ENCODE measurements at regions of chr3 and their contacts with region 1.

Region 1: DNA sequence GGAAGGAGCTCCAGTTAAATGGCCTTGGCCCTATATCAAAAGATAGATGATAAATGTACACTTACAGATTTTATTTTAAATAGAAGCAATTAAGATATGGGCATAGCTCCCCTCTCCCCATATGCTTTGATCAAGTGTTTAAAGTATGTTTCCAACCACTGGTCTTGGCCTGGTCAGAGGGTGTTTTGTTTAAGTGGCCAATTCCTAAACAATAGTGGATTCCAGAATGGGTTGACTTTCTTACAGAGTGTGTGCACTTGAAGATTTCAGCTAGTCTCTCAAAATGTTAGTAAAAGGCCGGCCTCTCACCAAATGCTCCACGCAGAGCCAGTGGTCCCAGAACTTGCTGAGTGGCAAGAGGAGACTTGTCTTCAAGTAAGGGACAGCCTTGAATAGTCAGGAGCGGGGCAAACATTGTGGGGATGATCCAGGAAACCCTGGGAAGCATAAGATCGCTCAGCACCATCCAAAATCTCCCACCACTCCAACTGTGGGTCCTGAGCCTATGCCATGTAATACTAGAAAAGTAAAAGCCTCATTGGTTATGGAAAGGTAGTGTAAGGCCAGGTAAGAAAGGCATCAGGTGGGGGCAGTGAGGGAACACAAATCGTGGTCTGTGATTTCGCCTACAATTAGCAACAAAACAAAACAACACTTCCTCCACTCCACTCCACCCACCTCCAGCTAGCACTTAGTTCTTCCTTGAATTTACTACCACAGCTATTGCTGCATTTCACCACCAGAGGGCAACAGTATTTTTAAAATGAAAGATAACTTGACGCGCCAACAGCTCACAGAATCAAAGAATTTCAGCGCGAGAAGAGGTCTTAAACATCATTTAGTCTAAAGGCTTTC is 4.8 kb downstream of the RARRES1 start:
- DNase-seq: peak in 2 of 5 donors; percentile 54 to 55
- ATAC-seq: peak in 1 of 4 donors; percentile 45
- H3K4me3 ChIP-seq: peak overlapping the region in 4 of 12 donors; percentile 15 to 29 (median 20)
- H3K27ac ChIP-seq: peak overlapping the region in 3 of 12 donors; percentile 7 to 48 (median 28)
- H3K4me1 ChIP-seq: peaks cover 0 to 65% (median 29%) of the 10 kb centered on the region in 12 donors
- H3K27me3 ChIP-seq: no peaks in the 10 kb centered on the region
- CTCF ChIP-seq: peak; percentile 73 to 89 (median 84)
- POLR2A ChIP-seq: no peak

Region 2: GRCh38 chr3:158368271-158368670 is 359.2 kb before region 1 on chr3:
- intact Hi-C with region 1: no loop called
- DNase-seq: no peak
- ATAC-seq: no peak
- H3K4me3 ChIP-seq: no peak overlapping the region
- H3K27ac ChIP-seq: no peak overlapping the region
- H3K4me1 ChIP-seq: no peaks in the 10 kb centered on the region
- H3K27me3 ChIP-seq: no peaks in the 10 kb centered on the region
- CTCF ChIP-seq: no peak
- POLR2A ChIP-seq: no peak

Region 3: DNA sequence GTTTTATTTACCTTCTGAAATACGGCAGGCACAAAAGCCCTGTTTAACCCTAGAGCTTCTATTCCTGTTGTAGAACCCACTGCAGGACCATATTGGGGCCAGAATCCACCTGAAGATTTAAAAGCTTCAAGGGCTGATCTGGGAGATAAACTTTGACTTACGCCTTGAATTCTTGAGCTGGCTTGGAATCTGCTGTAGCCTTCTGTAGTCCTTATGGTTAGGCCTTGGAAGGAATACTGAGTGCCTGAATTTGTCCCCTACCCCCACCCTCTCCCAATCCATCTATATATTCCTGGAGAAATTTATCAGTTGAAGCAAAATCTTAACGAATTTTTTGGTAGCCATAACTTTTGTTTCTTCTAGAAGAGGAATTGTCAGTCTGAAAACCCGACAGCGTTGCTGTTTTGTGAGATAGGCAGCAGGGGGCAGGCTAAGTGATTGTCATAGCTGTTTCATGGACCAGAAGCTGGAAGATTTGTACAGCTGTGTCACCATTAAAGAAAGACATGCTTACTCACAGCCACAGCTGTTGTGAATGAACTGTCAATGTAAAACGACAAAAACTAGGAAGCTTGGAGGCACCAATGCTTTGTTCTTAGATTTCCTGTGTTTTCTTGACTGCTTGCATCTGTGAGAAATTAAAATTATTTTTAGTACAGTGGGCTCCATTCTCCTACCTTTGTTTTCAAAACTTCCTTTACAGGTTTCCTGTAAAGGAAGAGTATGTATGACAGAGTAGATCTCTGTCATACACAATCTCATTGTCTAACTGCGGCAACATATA is 67.8 kb before region 1 on chr3:
- intact Hi-C with region 1: loop called in 2 of 10 experiments (anchors 5 to 10 kb)
- DNase-seq: peak in 3 of 5 donors; percentile 37 to 43 (median 39)
- ATAC-seq: peak; percentile 42 to 92 (median 84)
- H3K4me3 ChIP-seq: no peak overlapping the region
- H3K27ac ChIP-seq: peak overlapping the region in 10 of 12 donors; percentile 14 to 71 (median 54)
- H3K4me1 ChIP-seq: peaks cover 0 to 14% (median 2%) of the 10 kb centered on the region in 12 donors
- H3K27me3 ChIP-seq: no peaks in the 10 kb centered on the region
- CTCF ChIP-seq: peak; percentile 30 to 77 (median 68)
- POLR2A ChIP-seq: no peak

Region 4: GRCh38 chr3:158768361-158768787 is 40.9 kb after region 1 on chr3:
- intact Hi-C with region 1: loop called in 5 of 10 experiments (anchors 5 kb)
- DNase-seq: peak; percentile 50 to 77 (median 70)
- ATAC-seq: peak; percentile 56 to 83 (median 80)
- H3K4me3 ChIP-seq: peak overlapping the region in 2 of 12 donors; percentile 14 to 26
- H3K27ac ChIP-seq: peak overlapping the region in 11 of 12 donors; percentile 39 to 82 (median 66)
- H3K4me1 ChIP-seq: peaks cover 0 to 45% (median 29%) of the 10 kb centered on the region in 12 donors
- H3K27me3 ChIP-seq: no peaks in the 10 kb centered on the region
- CTCF ChIP-seq: no peak
- POLR2A ChIP-seq: no peak

Region 5: DNA sequence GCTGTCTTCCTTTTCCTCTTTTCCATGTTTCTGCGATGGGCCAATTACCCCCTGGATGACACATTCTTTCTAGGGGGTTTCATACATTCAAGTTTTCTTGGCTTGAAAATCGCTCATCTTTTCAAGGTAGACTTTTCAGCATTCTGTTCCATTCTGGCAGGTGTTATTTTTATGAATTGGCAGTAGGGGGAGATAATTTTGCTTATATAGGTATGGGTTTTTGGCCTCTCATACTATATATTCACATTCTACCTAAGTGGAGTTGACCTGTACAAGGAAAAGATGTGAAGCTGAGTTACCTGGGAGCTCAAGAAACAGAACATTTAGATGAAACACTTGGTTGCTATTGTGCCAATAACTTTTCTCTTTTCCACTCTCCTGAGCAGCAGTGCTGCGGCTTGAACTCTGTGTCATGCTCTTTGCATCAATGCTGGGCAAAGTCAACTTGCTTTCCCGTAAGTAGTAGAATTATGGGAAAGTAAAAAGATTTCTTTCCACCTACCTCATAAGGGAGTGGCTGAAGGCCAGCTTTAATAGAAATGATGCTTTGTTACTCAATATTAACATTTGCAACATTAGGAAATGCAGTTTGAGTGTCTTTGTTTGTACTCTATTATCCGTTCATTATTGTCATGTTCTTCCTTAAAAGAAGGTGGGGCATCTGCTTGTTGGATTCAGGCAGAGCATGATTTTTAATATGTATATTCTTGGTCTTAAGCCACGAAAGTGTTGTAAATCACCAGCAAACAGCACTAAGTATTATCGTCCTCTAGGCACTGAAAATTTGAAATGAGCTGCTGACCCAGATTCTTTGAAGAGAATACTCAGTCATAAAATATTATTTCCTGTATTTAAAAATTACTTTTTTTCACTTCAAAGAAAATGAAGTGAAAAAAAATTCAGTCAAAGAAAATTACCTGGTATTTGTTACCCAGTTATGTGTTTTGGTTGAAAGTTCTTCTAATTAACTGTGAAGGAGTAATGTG is 46.7 kb after region 1 on chr3:
- intact Hi-C with region 1: loop called in 5 of 10 experiments (anchors 5 kb)
- DNase-seq: no peak
- ATAC-seq: peak in 2 of 4 donors; percentile 65 to 70
- H3K4me3 ChIP-seq: no peak overlapping the region
- H3K27ac ChIP-seq: peak overlapping the region in 4 of 12 donors; percentile 11 to 85 (median 35)
- H3K4me1 ChIP-seq: peaks cover 0 to 46% (median 15%) of the 10 kb centered on the region in 12 donors
- H3K27me3 ChIP-seq: no peaks in the 10 kb centered on the region
- CTCF ChIP-seq: no peak
- POLR2A ChIP-seq: no peak